Activated T-helper 1 cell treated with anti-CD3 and anti-CD28 coated beads, Interleukin-12 subunit alpha, Interleukin-12 subunit beta, Interleukin-2, Interleukin-4 antibody, amounts not matched to agents 30 ng/mL and 10 ng/mL and 1 ng/mL, durations not matched to agents 14 hours and 24 hours and 36 hours (primary cell): ENCODE measurements at regions of chr9 and their contacts with region 1.

Region 1: DNA sequence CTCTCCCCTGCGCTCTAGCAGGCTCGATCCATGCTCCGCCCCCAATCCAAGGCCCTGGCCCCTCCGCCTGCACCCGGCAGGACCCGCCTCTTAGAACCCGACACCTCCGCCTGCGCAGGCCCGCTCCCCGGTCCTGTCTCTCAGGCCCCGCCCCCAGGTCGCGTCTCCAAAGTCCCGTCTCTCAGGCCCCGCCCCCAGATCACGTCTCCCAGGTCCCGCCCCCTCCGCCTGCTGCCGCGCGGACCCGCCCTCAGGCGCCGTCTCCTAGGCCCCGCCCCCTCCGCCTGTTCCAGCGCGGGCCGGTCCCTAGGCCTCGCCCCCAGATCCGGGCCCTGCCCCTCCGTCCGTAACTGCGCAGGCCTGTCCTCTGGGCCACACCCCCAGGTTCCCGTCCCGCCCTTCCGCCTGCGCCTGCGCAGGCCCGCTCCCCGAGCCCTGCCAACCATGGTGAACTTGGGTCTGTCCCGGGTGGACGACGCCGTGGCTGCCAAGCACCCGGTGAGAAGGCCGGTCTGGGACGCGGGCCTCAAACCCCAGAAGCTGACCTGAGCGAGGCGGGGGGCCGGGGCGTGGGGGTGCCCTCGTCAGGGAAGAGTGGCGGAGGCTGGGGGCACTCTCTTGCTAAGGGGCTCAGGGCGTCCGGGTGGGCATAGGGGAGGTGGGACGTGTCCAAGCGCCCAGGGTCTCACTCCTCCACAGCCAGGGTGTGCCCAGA is at the start of gene TMEM141:
- DNase-seq: peak; percentile 100
- H3K4me3 Mint-ChIP-seq: peak within 1 kb of the TSS; percentile 84
- H3K27ac Mint-ChIP-seq: peak within 1 kb of the TSS; percentile 81
- H3K4me1 Mint-ChIP-seq: peaks cover 32% of the 10 kb centered on the region
- H3K27me3 Mint-ChIP-seq: peaks cover 6% of the 10 kb centered on the region
- total RNA-seq, gene TMEM141: 37.2 and 39.0 TPM in 2 replicates

Region 2: DNA sequence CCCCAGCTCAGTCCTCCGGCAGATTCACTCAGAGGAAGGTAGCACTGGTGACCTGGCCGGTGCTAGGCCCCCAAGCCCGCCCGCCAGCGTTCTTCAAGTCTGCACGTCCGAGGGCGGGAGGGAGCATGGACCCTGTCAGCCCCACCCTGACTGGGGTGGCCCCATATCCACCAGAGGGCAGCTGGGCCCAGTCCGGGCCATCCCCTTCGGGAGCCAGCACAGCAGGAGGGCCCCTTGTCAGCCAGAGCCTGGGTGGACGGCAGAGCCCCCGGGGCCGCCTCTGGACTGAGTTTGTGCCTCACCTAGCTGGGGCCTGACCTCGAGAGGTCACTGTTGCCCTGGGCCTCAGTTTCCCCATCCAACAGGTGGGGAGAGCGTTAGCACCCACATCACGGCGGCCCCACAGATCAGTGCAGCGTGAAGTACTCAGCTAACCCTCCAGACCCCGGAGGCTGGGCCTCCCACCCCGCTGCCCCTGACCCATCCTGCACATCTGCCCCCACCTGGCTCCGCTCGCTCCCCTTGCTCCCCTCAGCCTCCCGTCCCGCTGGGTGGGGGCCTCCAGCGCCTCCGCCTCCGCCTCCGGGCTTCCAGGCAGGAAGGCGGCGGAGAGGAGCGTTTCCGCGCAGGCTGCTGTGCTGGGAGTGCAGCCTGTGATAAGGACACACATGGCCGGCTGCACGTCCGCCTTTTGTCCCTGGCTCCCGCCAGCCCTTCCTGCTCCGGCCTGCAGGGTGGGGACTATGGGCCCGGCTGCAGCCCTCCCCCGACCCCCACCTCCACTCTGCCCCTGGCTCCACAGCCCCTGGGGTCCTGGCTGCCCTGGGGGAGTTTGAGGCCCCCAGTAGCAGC is 145.0 kb before region 1 on chr9:
- intact Hi-C with region 1: no loop called
- DNase-seq: no peak
- H3K4me3 Mint-ChIP-seq: no peak overlapping the region
- H3K27ac Mint-ChIP-seq: no peak overlapping the region
- H3K4me1 Mint-ChIP-seq: no peaks in the 10 kb centered on the region
- H3K27me3 Mint-ChIP-seq: peaks cover 32% of the 10 kb centered on the region

Region 3: DNA sequence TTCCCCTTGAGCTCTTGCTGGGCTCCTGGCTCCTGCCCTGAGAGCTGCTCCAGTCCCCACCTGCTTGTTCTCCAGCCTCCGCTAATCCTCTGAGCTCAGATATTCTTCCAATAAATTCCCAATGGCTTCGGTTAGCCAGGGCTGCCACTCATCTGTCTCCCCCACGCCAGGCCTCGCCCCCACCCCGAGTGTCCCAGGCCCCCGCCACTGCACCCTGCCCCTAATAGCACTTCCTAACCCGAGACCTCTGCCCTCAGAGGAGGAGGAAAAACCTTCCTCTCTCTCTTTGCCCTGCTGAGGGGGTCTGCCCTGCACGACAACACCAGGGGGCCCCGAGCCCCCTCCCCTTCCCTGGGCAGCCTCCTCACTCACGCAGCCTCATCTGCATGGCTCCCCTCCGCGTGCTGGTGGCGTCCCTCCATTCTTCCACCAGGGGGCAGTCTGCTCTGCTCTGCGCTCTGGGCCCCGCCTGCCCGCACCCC is 21.3 kb before region 1 on chr9:
- intact Hi-C with region 1: loop called (anchors 1 kb)
- DNase-seq: no peak
- H3K4me3 Mint-ChIP-seq: no peak overlapping the region
- H3K27ac Mint-ChIP-seq: no peak overlapping the region
- H3K4me1 Mint-ChIP-seq: peaks cover 5% of the 10 kb centered on the region
- H3K27me3 Mint-ChIP-seq: peaks cover 8% of the 10 kb centered on the region

Region 4: GRCh38 chr9:136885950-136886578 is 95.0 kb after region 1 on chr9 and contains the start of gene TRAF2:
- intact Hi-C with region 1: loop called (anchors 2 kb)
- DNase-seq: peak; percentile 99
- H3K4me3 Mint-ChIP-seq: peak within 1 kb of the TSS; percentile 98
- H3K27ac Mint-ChIP-seq: peak within 1 kb of the TSS; percentile 93
- H3K4me1 Mint-ChIP-seq: peaks cover 44% of the 10 kb centered on the region
- H3K27me3 Mint-ChIP-seq: no peaks in the 10 kb centered on the region
- total RNA-seq, gene TRAF2: 67.4 and 76.3 TPM in 2 replicates

Region 5: DNA sequence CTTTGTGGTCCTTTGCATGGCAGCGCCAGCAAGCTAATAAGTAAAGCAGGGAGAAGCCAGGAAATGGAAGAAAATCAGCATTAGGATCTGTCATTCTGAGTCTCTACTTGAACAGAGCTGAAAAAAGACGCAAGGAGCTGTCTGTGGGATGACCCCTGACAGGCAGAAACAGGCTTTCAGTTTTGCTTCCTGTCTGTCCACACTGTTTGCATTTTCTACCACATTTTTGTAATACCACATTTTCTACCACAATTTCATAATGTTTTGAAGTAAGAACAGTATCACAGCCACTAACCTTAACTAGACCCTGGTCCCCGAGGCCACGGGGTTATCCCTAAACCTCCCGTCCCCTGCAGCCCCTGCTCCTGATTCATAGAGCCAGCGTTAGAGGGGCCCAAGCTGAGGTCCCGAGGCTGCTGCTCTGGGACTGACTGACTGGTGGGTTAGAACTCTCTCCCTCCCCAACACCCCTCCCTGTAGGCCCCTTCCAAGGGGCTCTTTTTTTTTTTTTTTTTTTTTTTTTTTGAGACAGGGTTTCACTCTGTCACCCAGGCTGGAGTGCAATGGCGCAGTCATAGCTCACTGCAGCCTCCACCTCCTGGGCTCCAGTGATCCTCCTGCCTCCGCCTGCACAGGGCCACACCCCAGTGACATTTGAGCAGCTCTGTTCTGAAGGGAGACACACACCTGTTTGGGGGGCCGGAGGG is 209.2 kb after region 1 on chr9:
- intact Hi-C with region 1: loop called (anchors 2 kb)
- DNase-seq: peak; percentile 22
- H3K4me3 Mint-ChIP-seq: peak overlapping the region; percentile 32
- H3K27ac Mint-ChIP-seq: peak overlapping the region; percentile 72
- H3K4me1 Mint-ChIP-seq: peaks cover 26% of the 10 kb centered on the region
- H3K27me3 Mint-ChIP-seq: peaks cover 13% of the 10 kb centered on the region

Region 6: DNA sequence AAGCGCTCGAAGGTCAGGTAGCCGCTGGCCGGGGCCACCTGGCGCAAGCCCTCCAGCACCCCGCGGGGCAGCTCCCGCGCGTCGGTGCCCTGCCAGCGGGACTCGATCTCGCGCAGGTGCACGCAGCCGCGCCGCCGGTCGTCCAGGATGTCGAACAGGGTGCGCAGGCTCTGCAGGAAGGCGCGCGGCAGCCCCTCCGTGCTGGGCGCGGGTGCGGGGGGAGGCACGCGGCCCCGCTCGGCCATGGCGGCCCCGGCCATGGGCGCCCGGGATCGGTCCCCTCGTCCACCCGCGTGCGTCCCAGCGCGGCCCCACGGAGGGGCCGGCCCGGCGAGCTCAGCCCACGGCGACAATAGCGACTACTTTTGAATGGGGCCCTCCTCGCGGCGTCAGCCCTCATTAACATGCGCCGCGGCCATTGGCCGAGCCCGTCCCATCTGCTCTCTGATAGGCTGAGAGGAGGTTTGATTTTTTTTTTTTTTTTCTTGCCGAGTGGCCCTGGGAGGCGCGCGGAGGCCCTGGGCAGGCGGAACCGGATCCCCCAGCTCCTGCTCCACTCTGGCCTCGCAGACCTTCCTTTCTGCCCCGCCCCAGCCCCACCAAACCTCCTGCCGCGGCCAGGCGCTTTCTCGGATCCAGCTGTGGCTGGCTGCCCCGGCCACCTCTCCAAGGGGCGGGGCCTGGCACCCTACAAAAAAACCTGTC is 279.3 kb after region 1 on chr9 and contains the start of gene SAPCD2:
- intact Hi-C with region 1: loop called (anchors 2 kb)
- DNase-seq: peak; percentile 85
- H3K4me3 Mint-ChIP-seq: peak within 1 kb of the TSS; percentile 86
- H3K27ac Mint-ChIP-seq: peak within 1 kb of the TSS; percentile 91
- H3K4me1 Mint-ChIP-seq: peaks cover 16% of the 10 kb centered on the region
- H3K27me3 Mint-ChIP-seq: peaks cover 3% of the 10 kb centered on the region
- total RNA-seq, gene SAPCD2: 23.9 and 25.1 TPM in 2 replicates

Region 7: GRCh38 chr9:137188490-137189296 is 397.6 kb after region 1 on chr9 and contains the starts of genes ANAPC2 and SSNA1:
- intact Hi-C with region 1: loop called (anchors 1 kb)
- DNase-seq: peak; percentile 94
- H3K4me3 Mint-ChIP-seq: peak within 1 kb of the TSS; percentile 97
- H3K27ac Mint-ChIP-seq: peak within 1 kb of the TSS; percentile 87
- H3K4me1 Mint-ChIP-seq: peaks cover 24% of the 10 kb centered on the region
- H3K27me3 Mint-ChIP-seq: peaks cover 4% of the 10 kb centered on the region
- total RNA-seq, gene ANAPC2: 62.5 and 63.6 TPM in 2 replicates
- total RNA-seq, gene SSNA1: 101 and 105 TPM in 2 replicates

Region 8: DNA sequence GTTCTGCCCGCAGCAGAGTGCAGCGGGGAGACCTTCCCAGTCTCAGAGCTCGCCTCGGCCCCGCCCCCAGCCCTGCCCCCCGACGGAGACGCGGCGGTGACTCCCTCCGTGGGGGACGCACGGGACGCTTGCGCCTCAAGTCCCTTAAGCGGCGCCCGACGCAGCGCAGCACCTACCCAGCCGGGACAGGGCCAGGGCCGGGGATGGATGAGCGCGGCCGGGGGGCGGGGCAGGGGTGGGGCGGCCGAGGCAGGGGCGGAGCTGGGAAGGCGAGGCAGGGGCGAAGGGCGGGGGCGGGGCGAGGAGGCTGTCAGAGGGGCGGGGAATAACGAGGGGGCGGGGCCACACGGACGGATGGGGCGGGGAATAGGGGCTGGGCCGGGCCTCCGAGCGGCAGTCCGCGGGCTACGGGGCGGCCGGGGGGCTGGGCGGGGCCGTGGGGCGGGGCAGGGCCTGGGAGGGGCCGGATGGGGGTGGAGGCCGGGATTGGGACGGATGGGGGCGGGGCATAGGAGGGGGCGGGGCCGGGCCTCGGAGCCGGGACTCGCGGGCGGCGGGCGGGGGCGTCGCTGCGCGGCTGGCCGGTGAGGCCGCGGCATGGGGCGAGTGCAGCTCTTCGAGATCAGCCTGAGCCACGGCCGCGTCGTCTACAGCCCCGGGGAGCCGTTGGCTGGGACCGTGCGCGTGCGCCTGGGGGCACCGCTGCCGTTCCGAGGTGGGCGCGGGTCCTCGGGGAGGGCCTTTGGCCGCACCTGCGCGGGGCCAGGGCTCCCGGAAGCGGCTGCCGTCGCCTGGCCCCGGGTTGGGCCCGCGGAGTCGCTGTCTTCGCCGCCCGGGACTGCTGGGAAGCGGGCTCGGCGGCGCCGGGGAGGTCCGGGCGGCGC is 814.3 kb after region 1 on chr9 and contains the start of gene ARRDC1:
- intact Hi-C with region 1: loop called (anchors 1 kb)
- DNase-seq: peak; percentile 85
- H3K4me3 Mint-ChIP-seq: peak within 1 kb of the TSS; percentile 85
- H3K27ac Mint-ChIP-seq: peak within 1 kb of the TSS; percentile 74
- H3K4me1 Mint-ChIP-seq: peaks cover 20% of the 10 kb centered on the region
- H3K27me3 Mint-ChIP-seq: peaks cover 6% of the 10 kb centered on the region
- total RNA-seq, gene ARRDC1: 65.7 and 70.3 TPM in 2 replicates